ENCODE measurements at regions of chr5 and their contacts with region 1.

Region 1: GRCh38 chr5:56270568-56271392 is 37.6 kb upstream of the ANKRD55 start:
- DNase-seq: peak; percentile 81
- H3K4me3 ChIP-seq: no peak overlapping the region
- CTCF ChIP-seq: peak; percentile 100

Region 2: DNA sequence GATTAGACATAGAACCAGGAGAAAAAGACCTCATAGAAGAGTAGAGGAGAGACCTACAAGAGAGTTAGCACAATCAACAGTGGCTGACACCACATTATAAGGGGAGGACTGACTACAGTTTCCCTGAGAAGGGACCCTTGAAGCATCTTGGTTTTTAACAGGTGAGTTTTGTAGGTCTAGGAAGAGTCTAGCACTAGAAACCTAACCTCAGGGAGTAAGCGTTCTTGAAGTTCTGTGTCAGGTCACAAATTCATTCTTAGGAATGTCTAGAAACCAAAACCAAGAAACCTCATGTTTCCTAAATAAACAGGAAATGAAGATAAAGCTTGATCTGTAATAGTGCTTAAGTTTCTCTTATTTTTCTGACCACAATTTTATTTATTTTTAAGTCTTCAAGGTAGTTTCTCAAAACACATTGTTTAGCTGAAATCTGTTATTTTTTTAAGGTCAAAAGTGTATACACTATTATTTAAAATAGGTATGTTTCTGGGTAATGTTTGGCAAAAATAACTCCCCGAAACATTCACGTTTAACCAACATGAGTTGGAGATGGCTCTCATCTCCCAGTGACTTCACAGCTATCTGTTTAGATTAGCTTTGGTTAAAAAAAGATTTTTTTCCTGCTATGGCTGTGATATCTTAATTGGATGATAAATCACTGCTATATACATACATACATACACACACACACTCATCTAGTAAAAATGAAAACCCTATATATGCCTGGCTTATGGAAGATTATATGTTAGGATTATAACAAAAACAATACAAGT is 581.6 kb after region 1 on chr5:
- in situ Hi-C with region 1: loop called (anchors 10 kb)
- DNase-seq: peak; percentile 24
- H3K4me3 ChIP-seq: no peak overlapping the region
- CTCF ChIP-seq: no peak

Region 3: DNA sequence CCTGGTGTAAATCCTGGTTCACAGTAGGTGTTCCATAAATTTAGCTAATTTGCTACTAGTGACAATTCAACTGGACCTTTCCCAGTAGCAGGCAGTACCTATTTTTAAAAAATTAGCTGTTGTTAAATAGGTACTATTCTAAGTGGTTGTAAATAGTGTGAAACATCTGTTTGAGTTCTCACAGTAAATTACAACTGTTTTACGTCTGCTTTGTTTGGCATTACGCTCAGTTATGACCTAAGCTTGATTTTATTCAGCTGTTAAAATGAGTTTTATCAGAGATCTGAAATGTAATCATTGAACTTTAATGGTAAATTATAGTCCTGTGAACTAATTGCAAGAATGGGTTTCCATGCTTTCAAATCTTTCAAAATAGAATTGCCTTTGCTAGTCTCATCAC is 997.0 kb after region 1 on chr5:
- in situ Hi-C with region 1: loop called (anchors 25 kb)
- DNase-seq: no peak
- H3K4me3 ChIP-seq: no peak overlapping the region
- CTCF ChIP-seq: no peak

Measured in astrocyte of the cerebellum (primary cell).